ENCODE measurements at regions of chr5 and their contacts with region 1.

Region 1: DNA sequence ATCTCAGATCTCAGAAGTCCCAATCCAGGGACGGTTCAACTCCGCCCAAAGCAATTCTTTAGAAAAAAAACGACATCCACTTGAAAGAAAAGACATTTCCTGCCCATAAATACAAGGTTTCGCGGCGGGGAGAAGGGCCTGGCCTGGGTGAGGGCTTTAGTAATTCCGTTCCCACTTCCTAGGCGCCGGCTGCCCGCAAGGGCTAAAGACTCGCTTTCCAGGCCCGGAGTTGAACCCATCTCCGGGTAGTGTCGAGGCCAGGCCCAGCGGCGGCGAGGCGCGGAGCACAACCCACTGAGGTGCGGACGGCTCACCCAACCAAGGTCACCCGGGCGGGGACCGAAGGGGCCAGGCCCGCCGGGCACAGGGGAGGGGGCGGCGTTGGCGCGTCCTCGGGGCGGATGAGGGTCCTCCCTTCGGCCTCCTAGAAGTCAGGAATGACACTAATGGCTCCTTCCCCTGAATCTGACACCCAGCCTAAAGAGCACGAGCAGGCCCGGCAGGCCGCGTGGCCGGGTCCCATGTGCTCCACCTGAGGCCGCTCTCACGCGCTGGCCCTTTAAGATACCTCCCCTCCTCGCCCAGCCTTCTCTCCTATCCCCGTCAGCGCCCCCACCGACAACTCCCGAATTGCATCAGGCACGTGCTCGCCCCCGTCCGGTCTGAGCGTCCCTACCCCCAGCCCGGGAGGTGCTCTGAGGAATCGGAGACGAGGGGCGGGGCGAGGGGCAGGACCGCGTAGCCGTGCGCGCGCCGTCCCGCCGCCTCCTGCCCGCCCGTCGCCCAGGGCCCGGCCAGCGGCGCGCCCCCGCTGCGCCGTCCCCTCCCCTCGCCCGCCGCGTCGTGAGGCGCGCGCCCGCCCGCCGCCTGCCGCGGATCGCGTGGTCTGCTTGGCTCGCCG is 467 bp upstream of the LARP1 start:
- DNase-seq: peak; percentile 99
- H3K4me3 Mint-ChIP-seq: peak overlapping the region; percentile 89
- H3K27ac Mint-ChIP-seq: peak overlapping the region; percentile 99
- H3K4me1 Mint-ChIP-seq: peaks cover 33% of the 10 kb centered on the region
- H3K27me3 Mint-ChIP-seq: no peaks in the 10 kb centered on the region

Region 2: DNA sequence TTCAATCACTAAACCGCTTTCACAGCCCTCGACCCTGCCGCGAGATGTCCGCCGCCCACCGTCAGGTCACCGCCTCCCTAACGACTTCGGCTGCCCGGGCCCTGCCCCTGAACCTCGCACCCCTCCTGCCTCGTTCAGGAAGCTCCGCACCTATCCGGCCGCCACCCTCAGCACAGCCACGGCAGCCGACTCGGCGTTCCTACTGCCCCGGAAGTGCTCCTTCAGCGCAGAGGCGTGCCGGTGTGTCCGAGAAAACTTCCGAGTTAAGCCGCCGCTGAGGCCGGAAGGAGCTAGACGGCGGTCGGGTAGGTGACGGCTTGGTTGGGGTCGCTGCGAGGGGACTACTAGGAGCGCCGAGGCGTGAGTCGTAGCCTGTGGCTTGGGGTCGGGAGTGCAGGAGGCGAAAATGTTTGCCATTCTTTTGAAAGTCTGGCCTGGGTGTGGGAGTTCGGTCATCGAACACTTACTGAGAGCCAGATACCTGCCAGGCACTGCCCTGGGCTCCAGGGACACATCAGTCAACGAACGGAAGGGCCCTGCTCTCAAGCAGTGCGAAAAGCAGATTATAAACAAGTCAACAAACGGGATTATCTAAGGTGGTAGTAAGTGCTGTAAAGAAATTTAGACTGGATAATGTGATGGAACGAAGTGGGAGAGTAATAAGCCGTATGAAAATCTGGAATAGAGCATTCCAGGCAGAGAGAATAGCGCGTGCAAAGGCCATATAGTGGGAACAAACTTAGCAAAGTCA is 715.8 kb before region 1 on chr5 and contains the starts of genes FAM114A2 and MFAP3:
- CTCF ChIA-PET with region 1: no interaction called
- POLR2A ChIA-PET with region 1: no interaction called
- intact Hi-C with region 1: loop called (anchors 5 kb)
- DNase-seq: peak; percentile 93
- H3K4me3 Mint-ChIP-seq: peak within 1 kb of the TSS; percentile 98
- H3K27ac Mint-ChIP-seq: peak within 1 kb of the TSS; percentile 93
- H3K4me1 Mint-ChIP-seq: peaks cover 47% of the 10 kb centered on the region
- H3K27me3 Mint-ChIP-seq: no peaks in the 10 kb centered on the region
- total RNA-seq, gene FAM114A2: 27.4 to 27.8 TPM
- total RNA-seq, gene MFAP3: 10.0 to 11.1 TPM

Region 3: GRCh38 chr5:154445422-154446182 is 309.1 kb before region 1 on chr5 and contains the start of gene SAP30L:
- CTCF ChIA-PET with region 1: no interaction called
- POLR2A ChIA-PET with region 1: no interaction called
- intact Hi-C with region 1: loop called (anchors 5 kb)
- DNase-seq: peak; percentile 97
- H3K4me3 Mint-ChIP-seq: peak within 1 kb of the TSS; percentile 99
- H3K27ac Mint-ChIP-seq: peak within 1 kb of the TSS; percentile 94
- H3K4me1 Mint-ChIP-seq: peaks cover 45% of the 10 kb centered on the region
- H3K27me3 Mint-ChIP-seq: no peaks in the 10 kb centered on the region
- total RNA-seq, gene SAP30L: 32.0 to 34.2 TPM

Region 4: GRCh38 chr5:154568589-154568988 is 186.1 kb before region 1 on chr5:
- CTCF ChIA-PET with region 1: no interaction called
- POLR2A ChIA-PET with region 1: no interaction called
- intact Hi-C with region 1: no loop called
- DNase-seq: no peak
- H3K4me3 Mint-ChIP-seq: no peak overlapping the region
- H3K27ac Mint-ChIP-seq: no peak overlapping the region
- H3K4me1 Mint-ChIP-seq: no peaks in the 10 kb centered on the region
- H3K27me3 Mint-ChIP-seq: peaks cover 16% of the 10 kb centered on the region

Region 5: DNA sequence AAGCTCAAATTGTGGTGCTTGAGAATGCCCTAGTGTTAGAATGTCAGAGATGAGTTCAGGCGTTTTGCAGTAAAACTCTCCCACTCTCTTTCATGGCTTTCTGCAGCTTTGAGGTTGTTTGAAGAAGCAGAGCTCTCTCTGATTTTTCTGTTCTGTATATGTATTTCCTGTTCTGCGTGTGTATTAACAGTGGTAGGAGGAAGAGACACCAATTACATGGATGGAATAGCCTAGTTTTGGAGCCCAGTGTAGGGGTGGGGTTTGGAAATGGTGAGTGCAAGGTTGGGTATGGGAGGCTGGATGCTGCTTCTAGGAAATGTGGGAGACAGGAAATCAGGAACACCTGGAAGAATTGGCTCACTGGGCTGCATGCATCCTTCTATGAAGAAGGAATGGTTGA is 12.9 kb after region 1 on chr5:
- CTCF ChIA-PET with region 1: interaction called, 3 read pairs
- POLR2A ChIA-PET with region 1: interaction called, 5 read pairs
- intact Hi-C with region 1: loop called (anchors 1 kb)
- DNase-seq: no peak
- H3K4me3 Mint-ChIP-seq: peak overlapping the region; percentile 30
- H3K27ac Mint-ChIP-seq: peak overlapping the region; percentile 79
- H3K4me1 Mint-ChIP-seq: peaks cover 71% of the 10 kb centered on the region
- H3K27me3 Mint-ChIP-seq: no peaks in the 10 kb centered on the region

Region 6: GRCh38 chr5:154829589-154830218 is 75.0 kb after region 1 on chr5:
- CTCF ChIA-PET with region 1: no interaction called
- POLR2A ChIA-PET with region 1: interaction called, 3 read pairs
- intact Hi-C with region 1: loop called (anchors 2 kb)
- DNase-seq: peak; percentile 61
- H3K4me3 Mint-ChIP-seq: no peak overlapping the region
- H3K27ac Mint-ChIP-seq: peak overlapping the region; percentile 89
- H3K4me1 Mint-ChIP-seq: peaks cover 37% of the 10 kb centered on the region
- H3K27me3 Mint-ChIP-seq: no peaks in the 10 kb centered on the region